ENCODE measurements at regions of chr20 and their contacts with region 1.

Region 1: DNA sequence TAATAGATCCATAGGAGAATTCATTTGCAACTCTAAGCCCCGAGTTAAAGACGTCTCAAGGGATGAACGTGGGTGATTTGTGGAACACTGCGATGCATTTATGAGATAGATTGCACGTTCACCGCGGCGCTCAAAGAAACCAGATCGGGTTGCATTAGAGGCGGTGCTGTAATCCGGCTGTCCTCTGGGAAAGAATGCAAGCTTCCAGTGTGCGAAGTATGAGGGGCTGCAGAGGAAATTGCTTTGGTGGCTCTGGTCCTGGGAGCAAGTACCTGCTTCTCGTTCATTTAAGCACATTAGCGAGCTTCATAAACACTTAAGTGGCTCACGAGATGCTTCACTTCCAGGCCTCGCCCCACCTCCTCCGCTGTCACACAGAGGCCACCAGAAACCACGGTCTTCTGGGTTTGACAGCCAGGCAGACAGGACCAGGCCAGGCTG is 182.3 kb downstream of the CDH4 start:
- DNase-seq: no peak
- ATAC-seq: no peak
- H3K4me3 ChIP-seq: no peak overlapping the region
- H3K27ac ChIP-seq: no peak overlapping the region
- H3K4me1 ChIP-seq: peaks cover 0 to 5% (median 0%) of the 10 kb centered on the region in 9 donors
- H3K27me3 ChIP-seq: peaks cover 0 to 66% (median 36%) of the 10 kb centered on the region in 7 donors
- CTCF ChIP-seq: no peak

Region 2: DNA sequence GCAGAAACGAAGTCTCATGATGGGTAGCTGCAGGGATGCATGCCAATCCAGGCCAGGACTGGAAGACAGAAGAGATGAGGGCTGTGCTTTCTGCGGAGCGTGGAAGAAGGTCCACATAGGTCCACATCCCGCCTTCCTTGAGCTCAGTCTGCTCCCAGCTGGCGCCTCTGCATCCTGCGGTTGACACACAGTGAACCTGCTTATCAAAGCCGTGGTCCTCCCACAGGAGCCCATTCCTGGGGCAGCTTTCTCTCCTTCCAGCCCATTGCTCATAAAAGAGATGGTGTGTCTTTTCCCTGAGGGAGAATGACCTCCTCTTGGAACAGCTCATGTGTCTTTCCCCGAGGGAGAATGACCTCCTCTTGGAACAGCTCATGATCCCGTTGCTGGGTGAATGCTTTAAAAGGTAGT is 43.1 kb after region 1 on chr20:
- intact Hi-C with region 1: loop called in 1 of 10 experiments (anchors 1 kb)
- DNase-seq: no peak
- ATAC-seq: no peak
- H3K4me3 ChIP-seq: no peak overlapping the region
- H3K27ac ChIP-seq: no peak overlapping the region
- H3K4me1 ChIP-seq: no peaks in the 10 kb centered on the region
- H3K27me3 ChIP-seq: peaks cover 0 to 39% (median 19%) of the 10 kb centered on the region in 7 donors
- CTCF ChIP-seq: no peak

Region 3: GRCh38 chr20:61588411-61589386 is 154.3 kb after region 1 on chr20:
- intact Hi-C with region 1: no loop called
- DNase-seq: no peak
- ATAC-seq: no peak
- H3K4me3 ChIP-seq: no peak overlapping the region
- H3K27ac ChIP-seq: no peak overlapping the region
- H3K4me1 ChIP-seq: peaks cover 0 to 12% (median 0%) of the 10 kb centered on the region in 9 donors
- H3K27me3 ChIP-seq: peaks cover 0 to 35% (median 22%) of the 10 kb centered on the region in 7 donors
- CTCF ChIP-seq: no peak

Region 4: DNA sequence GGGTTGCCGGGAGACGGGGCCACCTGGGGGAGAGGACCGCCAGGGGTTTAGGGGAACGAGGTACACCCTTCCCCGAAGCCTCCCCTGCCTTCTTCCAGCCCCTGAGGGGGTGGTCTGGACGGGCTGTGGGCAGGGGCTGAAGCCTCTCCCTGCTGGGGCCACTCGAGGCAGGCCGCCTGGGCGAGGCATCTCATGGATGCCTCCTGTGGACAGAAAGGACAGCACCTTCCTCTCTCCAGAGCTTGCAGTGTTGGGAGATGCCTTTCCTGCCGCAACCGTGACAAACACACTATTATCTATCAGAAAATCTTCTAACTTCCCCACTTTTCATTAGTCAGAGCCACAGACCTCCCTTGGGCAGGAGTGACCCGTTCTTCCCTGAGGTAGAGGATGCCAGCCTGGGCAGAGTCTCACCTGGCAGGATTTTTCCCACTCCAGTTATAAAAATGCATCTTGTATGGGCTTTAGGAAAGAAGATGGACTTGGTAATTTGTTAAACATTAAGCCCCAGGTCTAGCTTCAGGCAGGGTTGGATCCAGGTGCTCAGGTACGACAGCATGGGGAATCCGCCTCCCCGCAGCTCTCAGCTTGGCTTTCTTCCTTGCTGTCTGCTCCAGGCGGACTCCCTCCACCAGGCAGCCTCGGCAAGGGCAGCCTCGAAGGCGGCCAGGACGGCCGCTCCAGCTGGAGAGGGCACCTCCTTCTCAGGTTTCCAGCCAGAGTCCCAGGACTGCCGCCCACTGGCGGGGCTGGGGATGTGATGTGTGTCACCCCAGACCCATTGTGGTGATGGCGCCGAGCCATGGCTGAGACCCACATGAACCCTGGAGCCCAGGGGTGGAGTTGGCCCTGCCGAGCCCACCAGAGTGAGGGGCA is 774.8 kb after region 1 on chr20:
- intact Hi-C with region 1: loop called in 1 of 10 experiments (anchors 5 kb)
- DNase-seq: peak in 1 of 2 donors; percentile 9
- ATAC-seq: no peak
- H3K4me3 ChIP-seq: no peak overlapping the region
- H3K27ac ChIP-seq: no peak overlapping the region
- H3K4me1 ChIP-seq: no peaks in the 10 kb centered on the region
- H3K27me3 ChIP-seq: peaks cover 3 to 40% (median 28%) of the 10 kb centered on the region in 7 donors
- CTCF ChIP-seq: no peak

Measured in heart right ventricle (tissue), 16 donors.